Left ventricle myocardium superior (tissue), 1 donor: ENCODE measurements at regions of chr15 and their contacts with region 1.

Region 1: GRCh38 chr15:40190591-40190990 is 29.7 kb downstream of the BUB1B start:
- DNase-seq: no peak
- ATAC-seq: no peak

Region 2: DNA sequence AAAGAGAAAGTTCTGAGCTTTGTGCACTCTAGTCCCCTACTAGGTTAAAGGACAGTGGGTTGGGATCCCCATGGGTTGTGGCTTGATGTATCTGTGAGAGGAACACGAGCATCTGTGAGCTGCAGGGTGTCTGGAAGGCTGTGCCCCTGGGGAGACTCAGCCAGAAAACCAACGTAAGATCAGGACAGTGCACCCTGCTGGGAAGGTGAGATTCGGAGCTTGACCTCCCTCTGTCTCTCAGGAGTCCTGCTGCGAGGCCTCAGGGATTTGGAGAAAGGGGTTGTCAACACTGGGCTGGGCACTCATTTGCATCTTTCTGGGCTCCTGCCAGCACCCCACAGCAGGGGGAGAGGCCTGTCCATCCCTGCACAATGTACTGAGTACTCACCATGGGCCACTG is 77.1 kb after region 1 on chr15:
- intact Hi-C with region 1: loop called (anchors 2 kb)
- DNase-seq: no peak
- ATAC-seq: no peak